Naive thymus-derived CD4-positive, alpha-beta T cell (primary cell): ENCODE measurements at regions of chr14 and their contacts with region 1.

Region 1: GRCh38 chr14:74793506-74794168 is 30.5 kb downstream of the YLPM1 start:
- DNase-seq: peak in 7 of 9 donors; percentile 21 to 50 (median 34)
- ATAC-seq: peak; percentile 53
- H3K4me3 ChIP-seq: peak overlapping the region; percentile 25
- H3K4me3 Mint-ChIP-seq: peak overlapping the region; percentile 62 to 89 (median 84)
- H3K27ac ChIP-seq: peak overlapping the region; percentile 60
- H3K27ac Mint-ChIP-seq: peak overlapping the region; percentile 80 to 96 (median 88)
- H3K4me1 ChIP-seq: peaks cover 20% of the 10 kb centered on the region in 2 donors
- H3K4me1 Mint-ChIP-seq: peaks cover 39 to 69% (median 60%) of the 10 kb centered on the region in 7 donors
- H3K27me3 ChIP-seq: no peaks in the 10 kb centered on the region
- H3K27me3 Mint-ChIP-seq: no peaks in the 10 kb centered on the region

Region 2: GRCh38 chr14:74362361-74362915 is 431.2 kb before region 1 on chr14:
- CTCF ChIA-PET with region 1: no interaction called
- POLR2A ChIA-PET with region 1: no interaction called
- intact Hi-C with region 1: loop called in 1 of 2 experiments (anchors 5 kb)
- DNase-seq: peak; percentile 21 to 62 (median 57)
- ATAC-seq: peak; percentile 84
- H3K4me3 ChIP-seq: no peak overlapping the region
- H3K4me3 Mint-ChIP-seq: no peak overlapping the region
- H3K27ac ChIP-seq: no peak overlapping the region
- H3K27ac Mint-ChIP-seq: no peak overlapping the region
- H3K4me1 ChIP-seq: no peaks in the 10 kb centered on the region
- H3K4me1 Mint-ChIP-seq: no peaks in the 10 kb centered on the region
- H3K27me3 ChIP-seq: no peaks in the 10 kb centered on the region
- H3K27me3 Mint-ChIP-seq: peaks cover 5 to 19% (median 13%) of the 10 kb centered on the region in 5 donors

Region 3: DNA sequence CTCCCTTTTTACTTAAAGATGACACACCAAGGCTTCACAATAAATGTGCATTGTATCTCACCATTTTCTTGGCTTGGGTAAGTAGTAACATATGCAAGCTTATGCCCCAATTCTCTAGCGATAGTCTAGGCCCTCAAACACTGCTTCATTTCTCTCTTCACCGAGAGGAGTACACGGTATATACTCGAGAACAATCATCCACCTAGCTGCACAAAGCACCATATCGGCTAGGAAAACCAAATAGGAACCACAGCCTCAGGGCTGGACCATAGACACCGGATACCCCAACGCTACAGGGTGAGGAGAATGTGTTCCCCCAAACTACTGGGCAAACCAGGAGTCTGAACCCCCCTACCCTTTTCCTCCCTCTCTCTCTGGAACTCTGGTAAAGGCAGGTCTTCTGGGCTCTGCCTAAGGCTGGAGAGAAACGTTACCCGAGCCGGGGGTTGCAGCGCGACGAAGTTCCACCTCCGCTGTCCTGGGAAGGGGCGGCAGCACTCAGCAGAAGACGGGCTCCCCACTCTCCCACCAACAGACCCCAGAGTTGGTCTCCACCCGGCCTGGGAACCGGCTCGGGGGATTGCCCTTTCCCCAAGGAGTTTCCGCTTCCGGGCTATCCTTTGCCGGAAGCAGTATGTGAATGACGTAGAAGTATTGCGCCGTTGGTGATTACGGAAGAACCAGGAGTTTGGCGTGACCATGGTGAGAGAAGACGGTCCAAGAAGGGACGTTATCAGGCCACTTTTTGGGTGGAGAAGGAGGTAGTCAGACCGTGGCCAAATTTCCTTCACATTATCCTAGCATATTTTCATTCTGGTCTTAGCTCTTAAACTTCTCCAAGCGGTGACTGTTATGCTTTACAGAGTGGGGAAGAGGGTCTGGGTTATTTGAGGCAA is 80.9 kb before region 1 on chr14 and contains the starts of genes AREL1 and FCF1:
- CTCF ChIA-PET with region 1: no interaction called
- POLR2A ChIA-PET with region 1: interaction called, 5 read pairs
- intact Hi-C with region 1: loop called in 1 of 2 experiments (anchors 1 kb)
- DNase-seq: peak; percentile 53 to 87 (median 82)
- ATAC-seq: peak; percentile 96
- H3K4me3 ChIP-seq: peak within 1 kb of the TSS; percentile 75
- H3K4me3 Mint-ChIP-seq: peak within 1 kb of the TSS; percentile 93 to 100 (median 97)
- H3K27ac ChIP-seq: peak within 1 kb of the TSS; percentile 96
- H3K27ac Mint-ChIP-seq: peak within 1 kb of the TSS; percentile 95 to 100 (median 98)
- H3K4me1 ChIP-seq: peaks cover 9 to 24% of the 10 kb centered on the region in 2 donors
- H3K4me1 Mint-ChIP-seq: peaks cover 33 to 79% (median 66%) of the 10 kb centered on the region in 7 donors
- H3K27me3 ChIP-seq: no peaks in the 10 kb centered on the region
- H3K27me3 Mint-ChIP-seq: no peaks in the 10 kb centered on the region
- total RNA-seq, gene AREL1: 35.6 to 52.0 (median 43.5) TPM
- total RNA-seq, gene FCF1: 36.5 to 66.6 (median 60.8) TPM

Region 4: GRCh38 chr14:74804219-74804826 is 10.7 kb after region 1 on chr14:
- CTCF ChIA-PET with region 1: interaction called, 4 read pairs
- POLR2A ChIA-PET with region 1: interaction called, 4 read pairs
- intact Hi-C with region 1: loop called in 1 of 2 experiments (anchors 2 kb)
- DNase-seq: peak in 5 of 9 donors; percentile 8 to 41 (median 28)
- ATAC-seq: no peak
- H3K4me3 ChIP-seq: no peak overlapping the region
- H3K4me3 Mint-ChIP-seq: no peak overlapping the region
- H3K27ac ChIP-seq: no peak overlapping the region
- H3K27ac Mint-ChIP-seq: peak overlapping the region in 2 of 9 donors; percentile 6 to 29
- H3K4me1 ChIP-seq: no peaks in the 10 kb centered on the region
- H3K4me1 Mint-ChIP-seq: peaks cover 2 to 25% (median 14%) of the 10 kb centered on the region in 7 donors
- H3K27me3 ChIP-seq: no peaks in the 10 kb centered on the region
- H3K27me3 Mint-ChIP-seq: no peaks in the 10 kb centered on the region